Spleen (tissue), 13 donors: ENCODE measurements at regions of chr15 and their contacts with region 1.

Region 1: DNA sequence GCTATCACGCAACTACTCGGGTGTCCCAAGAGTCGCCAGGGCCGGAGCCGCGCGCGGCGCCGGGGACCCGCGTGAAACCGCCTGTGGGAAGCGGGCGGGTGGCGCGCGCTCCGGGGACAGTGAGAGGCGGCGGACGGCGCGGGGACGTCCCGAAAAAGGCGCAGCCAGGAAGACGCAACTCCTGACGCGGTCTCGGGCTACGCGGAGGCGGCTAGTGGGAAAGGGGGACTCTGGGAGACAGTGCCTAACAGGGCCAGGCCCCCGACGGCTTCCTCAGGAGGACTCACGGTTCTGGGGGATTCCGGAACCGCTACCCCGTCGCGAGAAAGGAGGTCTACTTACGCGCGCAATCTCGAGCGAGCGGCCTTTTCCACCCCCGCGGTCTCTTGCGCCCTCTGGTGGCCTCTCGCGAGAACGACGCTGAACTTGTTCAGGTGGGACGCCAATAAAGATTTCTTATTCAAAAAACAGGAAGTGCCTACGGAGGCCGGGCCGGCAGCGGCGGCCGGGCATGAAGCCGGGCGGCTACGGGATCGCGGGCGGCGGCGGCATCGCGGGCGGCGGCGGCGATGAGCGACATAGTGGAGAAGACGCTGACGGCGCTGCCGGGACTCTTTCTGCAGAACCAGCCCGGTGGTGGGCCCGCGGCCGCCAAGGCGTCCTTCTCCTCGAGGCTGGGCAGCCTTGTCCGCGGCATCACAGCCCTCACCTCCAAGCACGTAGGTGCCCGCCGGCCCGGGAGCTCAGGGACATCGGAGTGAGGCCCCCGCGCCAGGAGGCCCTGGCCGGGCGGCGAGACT is at the start of gene AP4E1:
- DNase-seq: peak; percentile 98
- H3K4me3 ChIP-seq: peak within 1 kb of the TSS; percentile 75 to 98 (median 84)
- H3K27ac ChIP-seq: peak within 1 kb of the TSS; percentile 94 to 98 (median 97)
- H3K4me1 ChIP-seq: peaks cover 16 to 60% (median 47%) of the 10 kb centered on the region in 6 donors
- H3K27me3 ChIP-seq: no peaks in the 10 kb centered on the region
- CTCF ChIP-seq: peak; percentile 96 to 99 (median 98)
- POLR2A ChIP-seq: peak in 2 of 3 donors; percentile 55 to 70
- total RNA-seq, gene AP4E1: 12.6 to 17.4 (median 13.7) TPM

Region 2: DNA sequence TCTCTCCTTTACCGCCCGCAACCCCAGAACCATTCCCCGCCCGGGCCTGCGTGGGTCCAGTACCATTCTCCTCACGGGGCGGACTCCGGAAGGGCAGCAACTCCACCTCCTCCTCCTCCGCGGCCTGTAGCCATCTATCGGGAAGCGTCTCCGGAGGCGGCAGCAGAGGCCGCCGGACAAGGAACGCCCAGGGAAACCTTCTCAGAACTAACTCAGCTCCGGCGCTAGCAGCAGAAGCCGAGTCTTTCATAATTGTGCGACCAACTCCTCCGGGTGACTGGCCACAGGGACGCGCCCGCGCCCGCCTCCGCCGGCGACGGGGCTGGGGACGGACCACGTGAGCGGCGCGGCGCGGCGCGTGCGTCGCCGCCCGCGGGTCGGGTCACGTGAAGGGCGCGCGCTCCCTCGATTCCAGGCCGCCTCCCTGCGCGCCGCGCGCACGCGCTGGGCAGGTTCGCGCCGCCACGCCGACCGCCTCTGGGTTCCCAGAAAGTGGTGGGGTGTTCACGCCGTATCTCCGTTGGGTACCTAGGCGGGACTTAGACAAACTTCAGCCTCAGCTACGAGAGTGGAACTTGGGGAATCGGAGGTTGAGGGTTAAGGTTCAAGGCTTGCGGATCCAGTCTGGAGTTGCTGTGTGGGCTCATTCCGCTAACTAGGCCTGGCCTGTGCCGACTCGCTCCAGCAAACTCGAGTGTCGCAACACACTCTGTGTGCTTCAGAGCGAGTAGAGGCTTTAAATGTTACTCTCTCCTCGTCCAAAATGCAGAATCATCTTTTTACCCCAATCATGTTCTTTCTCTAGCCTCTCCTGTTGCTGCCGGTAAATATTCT is 221.7 kb before region 1 on chr15 and contains the start of gene TRPM7:
- intact Hi-C with region 1: loop called (anchors 10 kb)
- DNase-seq: peak; percentile 97
- H3K4me3 ChIP-seq: peak within 1 kb of the TSS; percentile 83 to 94 (median 88)
- H3K27ac ChIP-seq: peak within 1 kb of the TSS; percentile 88 to 98 (median 95)
- H3K4me1 ChIP-seq: peaks cover 19 to 57% (median 46%) of the 10 kb centered on the region in 6 donors
- H3K27me3 ChIP-seq: no peaks in the 10 kb centered on the region
- CTCF ChIP-seq: peak in 1 of 11 experiments; percentile 20
- POLR2A ChIP-seq: peak in 2 of 3 donors; percentile 20 to 79
- total RNA-seq, gene TRPM7: 36.9 to 101 (median 48.6) TPM

Region 3: DNA sequence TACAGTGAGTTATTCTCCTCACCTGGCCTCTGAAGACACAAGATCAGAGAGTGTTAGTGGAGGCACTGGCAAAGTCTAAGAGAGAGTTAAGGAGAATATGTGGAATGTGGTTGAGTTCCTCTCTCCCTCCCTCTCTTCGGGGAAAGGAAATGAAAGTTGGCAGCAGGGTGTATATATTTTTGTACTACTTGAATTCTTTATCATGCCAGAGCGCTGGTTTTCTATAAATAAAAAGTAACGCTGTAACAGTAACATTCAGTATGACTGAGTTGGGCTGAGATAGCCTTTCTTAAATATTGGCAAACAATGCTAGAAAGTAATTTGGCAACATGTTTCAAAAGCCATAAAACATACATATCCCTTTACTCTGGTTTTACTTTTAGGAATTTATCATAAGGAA is 263.8 kb after region 1 on chr15:
- intact Hi-C with region 1: no loop called
- DNase-seq: no peak
- H3K4me3 ChIP-seq: no peak overlapping the region
- H3K27ac ChIP-seq: peak overlapping the region in 6 of 8 donors; percentile 14 to 55 (median 45)
- H3K4me1 ChIP-seq: peaks cover 0 to 23% (median 12%) of the 10 kb centered on the region in 6 donors
- H3K27me3 ChIP-seq: no peaks in the 10 kb centered on the region
- CTCF ChIP-seq: no peak
- POLR2A ChIP-seq: no peak

Region 4: DNA sequence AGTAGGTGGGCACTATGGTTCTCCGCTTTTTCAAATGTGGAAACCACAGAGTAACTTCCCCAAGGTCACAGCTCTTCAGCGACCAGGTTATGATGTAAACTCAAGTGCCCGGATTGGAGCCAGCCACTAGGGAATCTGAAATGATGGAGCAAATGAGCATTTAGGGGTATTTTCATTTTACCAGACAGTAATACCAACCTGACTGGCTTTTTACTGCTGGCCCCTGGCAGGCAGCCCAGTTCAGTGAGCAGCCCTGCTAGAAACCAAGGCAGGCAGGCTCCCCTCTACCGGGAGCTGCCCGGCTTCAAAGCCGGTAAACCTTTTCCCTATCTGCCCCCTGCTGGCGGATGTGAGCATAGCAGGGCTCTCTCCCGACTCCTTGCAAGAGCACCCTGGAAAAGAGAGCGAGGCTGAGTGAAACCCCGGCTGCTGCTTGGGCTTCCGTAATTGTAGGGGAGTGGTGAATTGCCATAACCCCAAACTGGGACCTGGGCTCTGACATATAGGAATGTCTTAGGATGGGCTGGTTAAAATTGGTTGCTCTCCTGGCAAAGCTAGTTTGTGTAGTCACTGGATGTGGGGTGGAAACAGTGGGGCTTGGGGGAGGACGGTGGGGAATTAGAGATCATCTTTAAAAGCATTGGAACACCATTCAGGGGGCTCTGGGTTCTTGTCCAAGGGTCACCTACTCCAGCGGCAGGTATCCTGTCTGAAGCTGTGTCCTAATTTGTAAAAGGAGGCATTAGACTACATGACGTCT is 284.3 kb after region 1 on chr15:
- intact Hi-C with region 1: loop called (anchors 10 kb)
- DNase-seq: peak; percentile 93
- H3K4me3 ChIP-seq: peak overlapping the region in 1 of 8 donors; percentile 23
- H3K27ac ChIP-seq: peak overlapping the region in 7 of 8 donors; percentile 15 to 79 (median 71)
- H3K4me1 ChIP-seq: peaks cover 0 to 60% (median 39%) of the 10 kb centered on the region in 6 donors
- H3K27me3 ChIP-seq: peaks cover 0 to 39% (median 5%) of the 10 kb centered on the region in 7 donors
- CTCF ChIP-seq: peak; percentile 79 to 97 (median 94)
- POLR2A ChIP-seq: no peak